IMR-90 (cell line): ENCODE measurements at regions of chr5 and their contacts with region 1.

Region 1: DNA sequence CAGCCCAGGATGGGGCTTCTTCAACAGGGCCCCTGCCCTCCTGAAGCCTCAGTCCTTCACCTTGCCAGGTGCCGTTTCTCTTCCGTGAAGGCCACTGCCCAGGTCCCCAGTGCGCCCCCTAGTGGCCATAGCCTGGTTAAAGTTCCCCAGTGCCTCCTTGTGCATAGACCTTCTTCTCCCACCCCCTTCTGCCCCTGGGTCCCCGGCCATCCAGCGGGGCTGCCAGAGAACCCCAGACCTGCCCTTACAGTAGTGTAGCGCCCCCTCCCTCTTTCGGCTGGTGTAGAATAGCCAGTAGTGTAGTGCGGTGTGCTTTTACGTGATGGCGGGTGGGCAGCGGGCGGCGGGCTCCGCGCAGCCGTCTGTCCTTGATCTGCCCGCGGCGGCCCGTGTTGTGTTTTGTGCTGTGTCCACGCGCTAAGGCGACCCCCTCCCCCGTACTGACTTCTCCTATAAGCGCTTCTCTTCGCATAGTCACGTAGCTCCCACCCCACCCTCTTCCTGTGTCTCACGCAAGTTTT is 23.6 kb downstream of the PCDHGC5 start:
- DNase-seq: peak; percentile 54
- ATAC-seq: no peak
- H3K4me3 ChIP-seq: no peak overlapping the region
- H3K27ac ChIP-seq: peak overlapping the region; percentile 84
- H3K4me1 ChIP-seq: peaks cover 57% of the 10 kb centered on the region
- H3K27me3 ChIP-seq: no peaks in the 10 kb centered on the region
- CTCF ChIP-seq: peak; percentile 62
- POLR2A ChIP-seq: no peak
- RAD21 ChIP-seq: peak; percentile 44

Region 2: DNA sequence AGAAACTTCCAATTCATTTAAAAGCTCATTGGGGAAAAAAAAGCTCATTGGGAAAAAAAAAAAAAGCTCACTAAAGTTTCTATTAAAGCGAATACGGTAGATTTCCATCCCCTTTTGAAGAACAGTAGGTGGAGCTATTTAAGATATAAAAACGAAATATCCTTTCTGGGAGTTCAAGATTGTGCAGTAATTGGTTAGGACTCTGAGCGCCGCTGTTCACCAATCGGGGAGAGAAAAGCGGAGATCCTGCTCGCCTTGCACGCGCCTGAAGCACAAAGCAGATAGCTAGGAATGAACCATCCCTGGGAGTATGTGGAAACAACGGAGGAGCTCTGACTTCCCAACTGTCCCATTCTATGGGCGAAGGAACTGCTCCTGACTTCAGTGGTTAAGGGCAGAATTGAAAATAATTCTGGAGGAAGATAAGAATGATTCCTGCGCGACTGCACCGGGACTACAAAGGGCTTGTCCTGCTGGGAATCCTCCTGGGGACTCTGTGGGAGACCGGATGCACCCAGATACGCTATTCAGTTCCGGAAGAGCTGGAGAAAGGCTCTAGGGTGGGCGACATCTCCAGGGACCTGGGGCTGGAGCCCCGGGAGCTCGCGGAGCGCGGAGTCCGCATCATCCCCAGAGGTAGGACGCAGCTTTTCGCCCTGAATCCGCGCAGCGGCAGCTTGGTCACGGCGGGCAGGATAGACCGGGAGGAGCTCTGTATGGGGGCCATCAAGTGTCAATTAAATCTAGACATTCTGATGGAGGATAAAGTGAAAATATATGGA is 81.9 kb before region 1 on chr5 and contains the start of gene PCDHGA12:
- CTCF ChIA-PET with region 1: no interaction called
- POLR2A ChIA-PET with region 1: no interaction called
- dilution Hi-C with region 1: no loop called
- in situ Hi-C with region 1: no loop called
- intact Hi-C with region 1: loop called (anchors 2 kb)
- DNase-seq: peak; percentile 87
- ATAC-seq: peak; percentile 85
- H3K4me3 ChIP-seq: peak within 1 kb of the TSS; percentile 23
- H3K27ac ChIP-seq: peak within 1 kb of the TSS; percentile 68
- H3K4me1 ChIP-seq: no peaks in the 10 kb centered on the region; the same call in 1 of the 2 replicates
- H3K27me3 ChIP-seq: no peaks in the 10 kb centered on the region
- CTCF ChIP-seq: peak; percentile 71
- POLR2A ChIP-seq: no peak
- RAD21 ChIP-seq: peak; percentile 75
- total RNA-seq, gene PCDHGA12: 8.8 and 9.7 TPM in 2 replicates

Region 3: DNA sequence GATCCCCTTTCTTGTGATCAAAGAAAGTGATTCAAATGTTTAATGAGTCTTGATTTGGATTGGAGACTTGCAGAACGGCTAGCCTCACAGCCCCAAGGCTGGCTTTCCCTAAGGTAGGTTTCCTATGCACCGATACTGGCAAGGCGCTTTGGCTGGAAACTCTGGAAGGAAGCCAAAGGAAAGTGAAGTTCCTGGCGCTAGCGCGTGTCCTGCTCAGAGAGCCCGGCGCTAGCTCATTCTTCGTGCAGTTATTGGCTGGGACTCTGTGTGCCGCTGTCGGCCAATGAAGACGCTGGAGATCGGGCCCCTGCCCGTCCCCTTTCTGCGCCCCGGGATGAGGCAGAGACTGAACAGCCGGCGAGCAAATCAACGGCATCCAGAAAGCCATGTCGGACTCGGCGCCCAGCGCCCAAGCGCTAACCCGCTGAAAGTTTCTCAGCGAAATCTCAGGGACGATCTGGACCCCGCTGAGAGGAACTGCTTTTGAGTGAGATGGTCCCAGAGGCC is 36.8 kb before region 1 on chr5 and contains the start of gene PCDHGC3:
- CTCF ChIA-PET with region 1: interaction called, 10 read pairs
- POLR2A ChIA-PET with region 1: no interaction called
- dilution Hi-C with region 1: no loop called
- in situ Hi-C with region 1: no loop called
- intact Hi-C with region 1: loop called (anchors 1 kb)
- DNase-seq: peak; percentile 95
- ATAC-seq: peak; percentile 97
- H3K4me3 ChIP-seq: peak within 1 kb of the TSS; percentile 54
- H3K27ac ChIP-seq: peak within 1 kb of the TSS; percentile 66
- H3K4me1 ChIP-seq: peaks cover 17% of the 10 kb centered on the region
- H3K27me3 ChIP-seq: no peaks in the 10 kb centered on the region
- CTCF ChIP-seq: peak; percentile 58
- POLR2A ChIP-seq: peak; percentile 57; the same call in 1 of the 2 replicates
- RAD21 ChIP-seq: peak; percentile 61
- total RNA-seq, gene PCDHGC3: 21.1 and 21.9 TPM in 2 replicates

Region 4: DNA sequence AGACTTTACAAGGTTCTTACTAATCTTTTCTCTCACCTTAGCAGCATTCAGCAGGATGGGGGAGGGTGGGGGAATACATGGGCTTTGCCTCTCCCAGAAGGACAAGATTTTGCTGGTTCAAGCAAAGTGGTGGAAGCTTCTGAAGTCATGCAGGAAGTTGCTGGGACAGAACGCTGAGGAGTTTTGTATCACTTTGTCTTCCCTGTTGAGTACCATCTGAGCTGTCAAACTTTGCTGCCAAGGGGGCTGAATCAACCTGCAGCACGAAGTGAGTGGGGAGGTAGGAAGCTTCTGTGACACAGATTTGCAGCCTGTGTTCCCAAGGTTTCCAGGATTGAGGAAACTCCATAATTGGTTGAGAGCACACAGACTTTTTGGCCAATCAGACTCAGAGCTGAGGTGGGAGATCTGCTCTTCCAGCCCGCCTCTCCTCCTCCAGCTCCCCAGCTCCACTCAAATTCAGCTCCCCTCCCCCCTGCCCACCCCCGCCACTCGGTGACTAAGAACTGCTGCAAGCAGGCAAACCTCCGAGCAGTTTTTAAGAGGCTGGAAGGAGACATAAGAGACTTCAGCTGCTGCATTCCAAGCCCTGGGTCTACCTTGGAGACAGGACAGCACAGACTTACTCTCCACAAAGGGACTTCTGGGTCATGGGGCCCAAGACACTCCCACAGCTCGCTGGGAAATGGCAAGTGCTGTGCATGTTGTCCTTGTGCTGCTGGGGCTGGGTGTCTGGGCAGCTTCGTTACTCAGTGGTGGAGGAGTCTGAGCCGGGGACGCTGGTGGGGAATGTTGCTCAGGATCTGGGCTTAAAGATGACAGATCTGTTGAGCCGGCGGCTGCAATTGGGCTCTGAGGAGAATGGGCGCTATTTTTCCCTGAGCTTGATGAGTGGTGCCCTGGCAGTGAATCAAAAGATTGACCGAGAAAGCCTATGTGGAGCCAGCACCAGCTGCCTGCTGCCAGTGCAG is 23.6 kb before region 1 on chr5 and contains the start of gene PCDHGC5:
- CTCF ChIA-PET with region 1: interaction called, 3 read pairs
- POLR2A ChIA-PET with region 1: no interaction called
- dilution Hi-C with region 1: no loop called
- in situ Hi-C with region 1: no loop called
- intact Hi-C with region 1: loop called (anchors 2 kb)
- DNase-seq: peak; percentile 87
- ATAC-seq: peak; percentile 83
- H3K4me3 ChIP-seq: no peak within 1 kb of the TSS
- H3K27ac ChIP-seq: peak within 1 kb of the TSS; percentile 54; the same call in 1 of the 2 replicates
- H3K4me1 ChIP-seq: peaks cover 22% of the 10 kb centered on the region
- H3K27me3 ChIP-seq: no peaks in the 10 kb centered on the region
- CTCF ChIP-seq: no peak
- POLR2A ChIP-seq: no peak
- RAD21 ChIP-seq: no peak
- total RNA-seq, gene PCDHGC5: 2.5 and 2.9 TPM in 2 replicates